CD4-positive, alpha-beta T cell (primary cell): ENCODE measurements at regions of chr22 and their contacts with region 1.

Region 1: DNA sequence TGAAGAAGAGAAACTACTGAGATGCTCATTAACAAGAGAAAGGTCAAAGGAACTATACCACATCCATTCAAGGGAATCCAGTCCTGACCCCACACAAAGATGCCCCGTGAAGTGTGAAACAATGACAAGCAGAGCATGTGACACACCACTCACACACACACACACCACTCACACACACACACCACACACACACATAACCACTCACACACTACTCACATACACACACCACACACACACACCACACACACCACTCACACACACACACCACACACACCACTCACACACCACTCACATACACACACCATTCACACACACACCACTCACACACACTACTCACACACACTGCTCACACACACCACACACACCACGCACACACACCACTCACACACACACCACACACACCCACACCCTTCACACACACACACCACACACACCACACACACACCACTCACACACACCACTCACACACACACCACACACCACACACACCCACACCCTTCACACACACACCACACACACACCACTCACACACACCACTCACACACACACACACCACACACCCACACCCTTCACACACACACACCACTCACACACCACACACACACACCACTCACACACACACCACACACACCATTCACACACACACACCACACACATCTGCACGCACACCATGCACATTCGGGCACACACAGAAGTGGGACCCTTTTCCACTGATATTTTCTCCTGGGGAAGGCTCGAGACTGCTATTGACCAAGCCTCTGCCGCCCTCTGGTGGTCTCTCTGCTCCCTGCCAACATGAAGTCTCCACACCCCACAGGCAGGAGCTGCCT is 32.0 kb upstream of the COMT start:
- DNase-seq: peak; percentile 76 to 94 (median 83)
- ATAC-seq: peak; percentile 93
- H3K4me3 ChIP-seq: no peak overlapping the region
- H3K4me3 Mint-ChIP-seq: no peak overlapping the region
- H3K27ac ChIP-seq: no peak overlapping the region
- H3K27ac Mint-ChIP-seq: peak overlapping the region; percentile 19
- H3K4me1 ChIP-seq: peaks cover 7% of the 10 kb centered on the region
- H3K4me1 Mint-ChIP-seq: peaks cover 10% of the 10 kb centered on the region
- H3K27me3 ChIP-seq: no peaks in the 10 kb centered on the region
- H3K27me3 Mint-ChIP-seq: no peaks in the 10 kb centered on the region
- CTCF ChIP-seq: peak; percentile 77

Region 2: GRCh38 chr22:19756288-19757128 is 153.1 kb before region 1 on chr22:
- CTCF ChIA-PET with region 1: interaction called, 20 read pairs
- POLR2A ChIA-PET with region 1: interaction called, 10 read pairs
- intact Hi-C with region 1: loop called (anchors 1 kb)
- DNase-seq: peak; percentile 59 to 87 (median 73)
- ATAC-seq: peak; percentile 85
- H3K4me3 ChIP-seq: peak overlapping the region; percentile 40
- H3K4me3 Mint-ChIP-seq: peak overlapping the region; percentile 87
- H3K27ac ChIP-seq: no peak overlapping the region
- H3K27ac Mint-ChIP-seq: no peak overlapping the region
- H3K4me1 ChIP-seq: peaks cover 32% of the 10 kb centered on the region
- H3K4me1 Mint-ChIP-seq: peaks cover 33% of the 10 kb centered on the region
- H3K27me3 ChIP-seq: peaks cover 45 to 59% of the 10 kb centered on the region in 2 experiments
- H3K27me3 Mint-ChIP-seq: peaks cover 68% of the 10 kb centered on the region
- CTCF ChIP-seq: peak; percentile 62

Region 3: DNA sequence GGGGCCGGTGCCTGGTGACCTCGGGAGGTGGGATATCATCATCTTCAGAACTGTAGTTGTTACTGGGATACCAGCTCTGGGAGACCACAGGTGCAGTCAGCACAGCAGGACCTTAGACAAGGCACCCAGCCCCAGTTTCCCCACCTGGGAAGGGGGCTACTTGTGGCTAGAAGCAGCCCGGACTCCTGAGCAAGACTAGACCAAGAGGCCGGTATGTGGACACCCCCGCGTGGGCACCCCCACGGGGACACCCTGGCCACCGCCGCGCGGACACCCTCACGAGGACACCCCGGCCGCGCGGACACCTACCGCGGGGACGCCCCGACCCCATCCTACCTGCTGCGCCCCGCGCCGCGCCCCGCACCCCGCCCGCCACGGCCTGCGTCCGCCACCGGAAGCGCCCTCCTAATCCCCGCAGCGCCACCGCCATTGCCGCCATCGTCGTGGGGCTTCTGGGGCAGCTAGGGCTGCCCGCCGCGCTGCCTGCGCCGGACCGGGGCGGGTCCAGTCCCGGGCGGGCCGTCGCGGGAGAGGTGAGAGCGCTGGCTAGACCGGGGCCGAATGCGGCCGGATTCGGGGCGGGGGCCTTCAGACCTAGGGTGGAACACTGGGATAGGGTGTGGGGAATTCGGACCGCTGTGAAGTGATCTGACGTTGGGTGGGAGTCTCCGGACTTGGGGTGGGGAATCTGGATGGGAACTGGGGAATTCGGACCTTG is 32.0 kb after region 1 on chr22 and contains the starts of genes COMT and TXNRD2:
- CTCF ChIA-PET with region 1: interaction called, 4 read pairs
- POLR2A ChIA-PET with region 1: no interaction called
- intact Hi-C with region 1: loop called in 1 of 2 experiments (anchors 2 kb)
- DNase-seq: peak; percentile 56 to 83 (median 68)
- ATAC-seq: peak; percentile 84
- H3K4me3 ChIP-seq: peak within 1 kb of the TSS; percentile 83
- H3K4me3 Mint-ChIP-seq: peak within 1 kb of the TSS; percentile 97
- H3K27ac ChIP-seq: peak within 1 kb of the TSS; percentile 47 to 62
- H3K27ac Mint-ChIP-seq: peak within 1 kb of the TSS; percentile 92
- H3K4me1 ChIP-seq: peaks cover 34% of the 10 kb centered on the region
- H3K4me1 Mint-ChIP-seq: peaks cover 42% of the 10 kb centered on the region
- H3K27me3 ChIP-seq: no peaks in the 10 kb centered on the region
- H3K27me3 Mint-ChIP-seq: no peaks in the 10 kb centered on the region
- CTCF ChIP-seq: no peak
- total RNA-seq, gene COMT: 11.3 to 11.4 TPM
- total RNA-seq, gene TXNRD2: 18.6 to 19.5 TPM